HepG2 (cell line): ENCODE measurements at regions of chr3 and their contacts with region 1.

Region 1: DNA sequence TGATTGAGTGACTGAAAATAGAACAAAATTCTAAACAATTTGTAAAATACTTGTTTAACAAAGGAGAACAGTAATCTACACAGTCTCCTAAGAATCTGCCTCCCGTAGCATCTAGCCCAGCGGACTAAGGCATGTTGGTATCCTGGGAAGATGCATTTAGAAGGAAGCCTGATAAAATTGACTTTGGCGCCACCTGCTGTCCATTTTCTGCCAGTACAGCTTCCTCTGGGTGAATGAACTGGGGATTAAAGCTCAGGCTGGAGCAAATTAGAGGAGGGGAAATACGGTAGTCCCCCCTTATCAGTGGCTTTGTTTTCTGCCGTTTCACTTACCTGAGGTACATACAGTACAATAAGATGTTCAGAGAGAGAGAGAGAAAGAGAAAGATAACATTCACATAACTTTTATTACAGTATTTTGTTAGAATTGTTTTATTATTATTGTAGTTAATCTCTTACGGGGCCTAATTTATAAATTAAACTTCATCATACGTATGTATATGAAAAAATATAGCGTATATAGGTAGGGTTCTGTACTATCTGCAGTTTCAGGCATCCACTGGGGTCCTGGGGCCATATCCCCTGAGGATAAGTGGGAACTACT is 191.6 kb downstream of the GAP43 start:
- DNase-seq: peak; percentile 70
- ATAC-seq: peak; percentile 92
- H3K4me3 ChIP-seq: peak overlapping the region in 1 of 3 experiments; percentile 6; a peak in 1 of 6 replicates
- H3K27ac ChIP-seq: no peak overlapping the region
- H3K4me1 ChIP-seq: peaks cover 24% of the 10 kb centered on the region
- H3K27me3 ChIP-seq: no peaks in the 10 kb centered on the region
- CTCF ChIP-seq: peak; percentile 89
- EP300 ChIP-seq: no peak
- POLR2A ChIP-seq: no peak
- RAD21 ChIP-seq: peak; percentile 73

Region 2: DNA sequence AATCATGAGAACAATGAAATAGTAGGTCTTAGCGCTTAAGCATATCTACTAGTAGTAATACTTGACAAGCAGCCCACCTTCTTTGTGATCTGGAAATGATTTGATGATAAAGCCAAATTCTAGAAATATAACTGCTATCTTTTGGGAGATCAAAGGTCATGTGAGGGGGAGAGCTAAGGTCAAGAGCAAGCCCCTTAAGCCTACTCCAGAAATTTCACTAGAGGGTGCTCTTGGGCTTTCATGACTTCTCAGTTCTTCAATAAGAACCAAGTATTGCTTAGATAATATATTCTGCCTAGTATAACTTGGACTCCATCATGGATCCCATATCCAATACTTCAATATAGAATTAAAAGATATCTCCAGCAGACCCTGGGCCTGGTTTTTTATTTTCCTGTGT is 987.4 kb before region 1 on chr3:
- CTCF ChIA-PET with region 1: no interaction called
- POLR2A ChIA-PET with region 1: no interaction called
- in situ Hi-C with region 1: no loop called
- intact Hi-C with region 1: loop called (anchors 2 kb)
- DNase-seq: peak; percentile 66
- ATAC-seq: peak; percentile 89
- H3K4me3 ChIP-seq: no peak overlapping the region
- H3K27ac ChIP-seq: no peak overlapping the region
- H3K4me1 ChIP-seq: no peaks in the 10 kb centered on the region
- H3K27me3 ChIP-seq: no peaks in the 10 kb centered on the region
- CTCF ChIP-seq: peak; percentile 68
- EP300 ChIP-seq: no peak
- POLR2A ChIP-seq: no peak
- RAD21 ChIP-seq: peak; percentile 62

Region 3: DNA sequence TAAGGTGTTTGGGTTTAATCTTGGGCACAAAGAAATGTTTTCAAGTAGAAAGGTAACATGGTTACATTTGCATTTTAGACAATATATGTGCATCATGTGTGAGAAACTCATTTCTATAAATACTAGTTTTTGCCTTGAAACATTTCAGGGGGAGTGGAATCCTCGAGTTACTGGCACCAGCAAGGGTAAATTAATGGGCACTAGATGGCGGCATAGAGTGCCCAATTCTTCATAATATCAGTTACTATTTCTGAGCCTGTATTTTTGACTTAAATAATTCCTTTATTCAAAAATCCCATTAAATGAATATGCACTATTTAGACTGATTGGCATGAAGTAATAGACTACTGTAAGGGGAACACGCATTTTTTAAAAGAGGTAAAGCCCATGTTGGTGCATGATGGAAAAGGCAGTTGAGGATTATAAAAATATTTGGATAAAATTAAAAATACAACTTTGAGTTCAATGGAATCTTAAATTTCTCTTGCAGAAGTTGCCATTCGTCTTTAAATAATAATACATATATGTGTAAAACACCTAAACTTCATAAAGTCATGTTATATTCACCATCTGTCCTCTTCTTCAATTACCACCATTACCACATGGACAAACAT is 774.1 kb before region 1 on chr3:
- CTCF ChIA-PET with region 1: interaction called, 6 read pairs
- POLR2A ChIA-PET with region 1: no interaction called
- in situ Hi-C with region 1: no loop called
- intact Hi-C with region 1: loop called (anchors 5 kb)
- DNase-seq: peak; percentile 7
- ATAC-seq: peak; percentile 49; the same call in 1 of the 3 replicates
- H3K4me3 ChIP-seq: no peak overlapping the region
- H3K27ac ChIP-seq: no peak overlapping the region
- H3K4me1 ChIP-seq: no peaks in the 10 kb centered on the region
- H3K27me3 ChIP-seq: no peaks in the 10 kb centered on the region
- CTCF ChIP-seq: peak; percentile 54
- EP300 ChIP-seq: no peak
- POLR2A ChIP-seq: no peak
- RAD21 ChIP-seq: 0 out of 2 replicates have a peak, but pooled peaks have one; percentile 12

Region 4: GRCh38 chr3:115783938-115784738 is 30.7 kb before region 1 on chr3:
- CTCF ChIA-PET with region 1: interaction called, 10 read pairs
- POLR2A ChIA-PET with region 1: interaction called, 4 read pairs
- in situ Hi-C with region 1: no loop called
- intact Hi-C with region 1: loop called (anchors 2 kb)
- DNase-seq: peak; percentile 87
- ATAC-seq: peak; percentile 96
- H3K4me3 ChIP-seq: peak overlapping the region; percentile 55 to 77 (median 70)
- H3K27ac ChIP-seq: peak overlapping the region; percentile 80
- H3K4me1 ChIP-seq: peaks cover 48% of the 10 kb centered on the region
- H3K27me3 ChIP-seq: no peaks in the 10 kb centered on the region
- CTCF ChIP-seq: peak; percentile 91
- EP300 ChIP-seq: peak in 1 of 2 experiments; percentile 61; a peak in 1 of 4 replicates
- POLR2A ChIP-seq: peak; percentile 14 to 64; a peak in 2 of 4 replicates
- RAD21 ChIP-seq: peak; percentile 91